Breast epithelium (tissue), 4 donors: ENCODE measurements at regions of chr6 and their contacts with region 1.

Region 1: GRCh38 chr6:108862479-108863191 is 14.4 kb downstream of the ARMC2 start:
- DNase-seq: no peak
- H3K4me3 ChIP-seq: no peak overlapping the region
- H3K27ac ChIP-seq: no peak overlapping the region
- H3K4me1 ChIP-seq: no peaks in the 10 kb centered on the region
- H3K27me3 ChIP-seq: no peaks in the 10 kb centered on the region
- CTCF ChIP-seq: no peak
- POLR2A ChIP-seq: no peak

Region 2: GRCh38 chr6:108455688-108456087 is 406.9 kb before region 1 on chr6:
- intact Hi-C with region 1: loop called (anchors 5 kb)
- DNase-seq: no peak
- H3K4me3 ChIP-seq: no peak overlapping the region
- H3K27ac ChIP-seq: no peak overlapping the region
- H3K4me1 ChIP-seq: no peaks in the 10 kb centered on the region
- H3K27me3 ChIP-seq: no peaks in the 10 kb centered on the region
- CTCF ChIP-seq: no peak
- POLR2A ChIP-seq: no peak

Region 3: DNA sequence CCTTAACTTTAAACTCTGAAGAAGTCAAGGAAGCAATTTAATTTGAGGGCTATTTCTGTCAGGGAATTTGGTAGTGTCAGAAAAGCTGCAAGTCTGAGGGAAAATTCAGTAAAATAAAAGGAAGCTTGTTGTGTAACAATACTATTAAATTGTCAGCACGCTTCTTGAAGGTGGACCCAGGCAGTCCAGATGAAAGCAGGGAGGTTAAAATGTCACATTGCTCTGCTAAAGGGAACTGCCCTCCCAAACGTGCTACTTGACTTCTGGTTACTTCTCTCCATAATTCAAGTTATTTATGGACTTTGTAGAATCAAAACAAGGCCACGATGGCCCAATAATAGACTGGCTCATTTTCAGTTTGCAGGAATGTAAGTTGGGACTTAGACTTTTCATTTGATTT is 42.6 kb before region 1 on chr6:
- intact Hi-C with region 1: no loop called
- DNase-seq: no peak
- H3K4me3 ChIP-seq: no peak overlapping the region
- H3K27ac ChIP-seq: no peak overlapping the region
- H3K4me1 ChIP-seq: no peaks in the 10 kb centered on the region
- H3K27me3 ChIP-seq: no peaks in the 10 kb centered on the region
- CTCF ChIP-seq: no peak
- POLR2A ChIP-seq: no peak